Right ventricle myocardium inferior (tissue), 1 donor: ENCODE measurements at regions of chr14 and their contacts with region 1.

Region 1: DNA sequence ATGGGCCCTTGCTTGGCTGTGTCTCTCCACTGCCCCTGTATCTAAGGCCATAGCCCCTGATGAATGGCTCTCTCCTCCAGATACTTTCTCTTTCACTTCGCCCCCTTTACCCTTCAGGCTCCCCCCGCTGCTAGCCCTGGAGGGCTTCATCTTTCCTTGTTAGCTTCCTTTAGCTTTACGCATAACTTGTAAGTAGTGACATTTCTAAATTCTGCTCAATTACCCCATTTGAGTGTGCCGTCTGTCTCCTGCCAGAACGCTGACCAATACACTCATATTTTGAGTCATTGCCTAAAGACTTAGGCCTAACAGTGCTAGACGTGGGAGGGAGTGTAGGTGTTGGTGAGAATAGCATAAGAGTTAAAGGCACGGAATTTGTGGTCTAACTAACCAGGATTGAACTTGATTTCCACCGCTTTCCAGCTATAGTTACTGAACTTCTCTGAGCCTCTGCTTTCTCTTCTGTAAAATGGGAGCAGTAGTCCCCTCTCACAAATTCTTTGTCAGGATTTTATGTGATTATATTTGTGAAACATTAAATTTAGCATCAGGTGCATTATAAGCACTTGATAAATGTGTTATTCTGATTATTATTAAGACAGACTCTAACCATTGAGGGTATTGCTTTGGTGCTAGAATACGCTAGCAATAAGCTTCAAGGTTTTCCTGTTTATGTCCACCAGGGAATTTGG is 129.3 kb downstream of the ZFP36L1 start:
- DNase-seq: no peak
- ATAC-seq: no peak

Region 2: DNA sequence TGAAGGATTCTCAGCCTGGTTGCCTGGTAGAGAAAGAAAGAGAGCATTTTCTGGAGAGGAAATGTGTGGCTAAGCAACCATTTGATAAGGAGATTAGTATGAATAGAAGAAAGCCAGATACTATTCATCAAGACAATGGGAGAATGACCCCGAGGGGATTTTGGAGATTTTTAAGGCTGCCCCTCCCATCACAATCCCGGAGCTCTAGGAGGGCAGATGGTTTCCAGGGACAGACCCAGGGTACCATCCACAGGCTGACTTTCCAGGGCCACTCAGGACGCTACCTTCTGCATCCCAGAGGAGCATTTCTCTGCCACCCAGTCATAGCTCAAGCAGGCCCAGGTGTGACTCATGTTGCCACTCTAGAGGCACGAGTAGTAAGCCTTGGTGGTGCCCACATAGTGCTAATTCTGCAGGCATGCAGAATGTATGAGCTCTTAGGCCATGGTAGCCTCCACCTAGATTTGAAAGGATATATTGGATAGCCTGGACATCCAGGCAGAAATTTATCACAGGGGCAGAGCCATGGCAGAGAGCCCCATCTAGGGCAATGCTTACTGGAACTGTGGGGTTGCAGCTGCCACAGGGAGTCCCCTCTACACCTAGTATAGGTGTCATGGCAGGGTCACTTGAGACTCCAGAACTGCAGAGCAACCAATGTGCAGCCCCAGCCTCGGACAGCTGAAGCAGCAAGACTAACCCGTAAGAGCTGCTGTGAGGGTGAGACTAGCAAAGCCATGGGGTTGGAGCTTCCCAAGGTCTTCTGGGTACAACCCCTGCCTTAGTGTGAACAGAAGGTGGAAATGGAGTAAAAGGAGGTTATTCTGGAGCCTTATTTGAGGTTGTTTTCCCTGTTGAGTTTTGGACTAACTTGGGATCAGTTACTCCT is 236.6 kb before region 1 on chr14:
- intact Hi-C with region 1: no loop called
- DNase-seq: no peak
- ATAC-seq: no peak

Region 3: GRCh38 chr14:68627880-68628607 is 35.5 kb before region 1 on chr14:
- intact Hi-C with region 1: loop called (anchors 5 kb)
- DNase-seq: peak; percentile 84
- ATAC-seq: peak; percentile 51